A673 (cell line): ENCODE measurements at regions of chr6 and their contacts with region 1.

Region 1: DNA sequence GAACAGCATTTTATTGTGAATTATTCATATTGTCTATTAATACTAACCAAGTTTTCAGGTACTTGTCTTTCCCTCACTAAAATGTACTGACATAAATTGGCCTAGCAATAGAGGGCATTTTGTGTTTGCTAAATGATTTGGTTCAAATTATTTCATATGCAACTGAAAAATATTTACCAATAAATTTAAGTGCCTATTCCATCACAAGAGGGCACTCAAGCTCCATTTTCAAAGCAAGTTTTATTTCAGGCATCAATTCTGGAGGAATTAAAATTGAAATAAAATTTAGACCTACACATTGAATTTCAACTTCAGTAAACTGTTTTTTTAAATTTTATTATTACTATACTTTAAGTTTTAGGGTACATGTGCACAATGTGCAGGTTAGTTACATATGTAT is 114.3 kb upstream of the SYNCRIP start:
- DNase-seq: peak; percentile 45
- H3K4me3 ChIP-seq: no peak overlapping the region
- H3K27ac ChIP-seq: no peak overlapping the region
- H3K4me1 ChIP-seq: no peaks in the 10 kb centered on the region
- H3K27me3 ChIP-seq: no peaks in the 10 kb centered on the region
- CTCF ChIP-seq: peak; percentile 57

Region 2: DNA sequence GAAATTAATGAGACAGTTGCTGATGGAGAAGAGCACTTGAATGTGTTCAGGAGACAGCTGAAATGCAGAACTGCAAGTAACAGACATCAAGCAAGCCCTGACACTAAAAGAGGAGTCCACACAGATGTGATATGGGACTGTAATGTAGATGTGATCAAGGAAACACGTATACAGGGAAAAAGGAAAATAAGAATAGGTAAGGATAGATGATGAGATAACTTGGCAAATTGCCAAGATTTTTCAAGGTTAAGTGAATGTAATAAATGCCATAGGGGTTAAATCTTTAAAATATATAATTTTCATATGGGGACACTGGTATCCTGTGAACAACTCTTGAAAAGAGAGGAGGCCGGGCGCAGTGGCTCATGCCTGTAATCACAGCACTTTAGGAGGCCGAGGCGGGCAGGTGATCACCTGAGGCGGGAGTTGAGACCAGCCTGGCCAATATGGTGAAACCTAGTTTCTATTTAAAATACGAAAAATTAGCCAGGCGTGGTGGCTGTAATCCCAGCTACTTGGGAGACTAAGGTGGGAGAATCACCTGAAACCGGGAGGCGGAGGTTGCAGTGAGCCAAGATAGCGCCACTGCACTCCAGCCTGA is 156.2 kb before region 1 on chr6:
- CTCF ChIA-PET with region 1: no interaction called
- POLR2A ChIA-PET with region 1: no interaction called
- intact Hi-C with region 1: no loop called
- DNase-seq: no peak
- H3K4me3 ChIP-seq: no peak overlapping the region
- H3K27ac ChIP-seq: no peak overlapping the region
- H3K4me1 ChIP-seq: no peaks in the 10 kb centered on the region
- H3K27me3 ChIP-seq: no peaks in the 10 kb centered on the region
- CTCF ChIP-seq: no peak

Region 3: GRCh38 chr6:86192123-86192522 is 435.1 kb after region 1 on chr6:
- CTCF ChIA-PET with region 1: no interaction called
- POLR2A ChIA-PET with region 1: no interaction called
- intact Hi-C with region 1: loop called (anchors 5 kb)
- DNase-seq: peak; percentile 59
- H3K4me3 ChIP-seq: no peak overlapping the region
- H3K27ac ChIP-seq: no peak overlapping the region
- H3K4me1 ChIP-seq: no peaks in the 10 kb centered on the region
- H3K27me3 ChIP-seq: no peaks in the 10 kb centered on the region
- CTCF ChIP-seq: peak; percentile 55

Region 4: DNA sequence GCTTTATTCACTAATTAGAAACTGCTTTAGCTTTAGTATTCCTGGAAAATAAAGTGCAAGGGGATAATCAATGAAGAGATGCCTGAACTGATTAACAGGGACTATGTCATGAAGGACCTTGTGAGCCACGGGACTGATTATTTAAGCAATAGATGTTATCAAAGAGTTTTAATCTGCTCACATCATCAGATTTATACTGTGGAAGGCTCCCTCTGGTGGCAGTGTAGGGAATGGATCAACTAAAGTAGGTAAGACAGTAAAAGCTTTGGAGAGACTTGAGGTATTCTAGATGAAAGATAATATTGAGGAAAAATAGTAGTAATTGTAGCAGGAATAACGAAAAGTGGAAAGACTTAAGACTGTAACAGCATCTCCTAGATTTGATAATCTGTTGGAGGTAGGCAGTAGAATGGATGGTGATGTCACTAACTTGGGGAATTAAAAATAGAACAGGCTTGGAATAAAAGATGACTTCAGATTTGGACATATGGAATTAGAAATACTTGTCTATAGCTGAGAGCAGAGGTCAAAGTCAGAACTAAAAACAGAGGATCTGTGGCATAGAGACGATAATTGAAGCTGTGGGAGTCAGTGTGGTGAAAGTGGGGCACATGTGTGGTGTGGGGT is 1100.1 kb after region 1 on chr6:
- CTCF ChIA-PET with region 1: no interaction called
- POLR2A ChIA-PET with region 1: no interaction called
- intact Hi-C with region 1: loop called (anchors 5 kb)
- DNase-seq: peak; percentile 60
- H3K4me3 ChIP-seq: no peak overlapping the region
- H3K27ac ChIP-seq: no peak overlapping the region
- H3K4me1 ChIP-seq: no peaks in the 10 kb centered on the region
- H3K27me3 ChIP-seq: no peaks in the 10 kb centered on the region
- CTCF ChIP-seq: peak; percentile 85

Region 5: GRCh38 chr6:87029711-87030314 is 1272.8 kb after region 1 on chr6:
- CTCF ChIA-PET with region 1: no interaction called
- POLR2A ChIA-PET with region 1: no interaction called
- intact Hi-C with region 1: loop called (anchors 5 kb)
- DNase-seq: peak; percentile 55
- H3K4me3 ChIP-seq: no peak overlapping the region
- H3K27ac ChIP-seq: no peak overlapping the region
- H3K4me1 ChIP-seq: no peaks in the 10 kb centered on the region
- H3K27me3 ChIP-seq: peaks cover 5% of the 10 kb centered on the region
- CTCF ChIP-seq: peak; percentile 74